Cardiac septum (tissue), 1 donor: ENCODE measurements at regions of chr12 and their contacts with region 1.

Region 1: DNA sequence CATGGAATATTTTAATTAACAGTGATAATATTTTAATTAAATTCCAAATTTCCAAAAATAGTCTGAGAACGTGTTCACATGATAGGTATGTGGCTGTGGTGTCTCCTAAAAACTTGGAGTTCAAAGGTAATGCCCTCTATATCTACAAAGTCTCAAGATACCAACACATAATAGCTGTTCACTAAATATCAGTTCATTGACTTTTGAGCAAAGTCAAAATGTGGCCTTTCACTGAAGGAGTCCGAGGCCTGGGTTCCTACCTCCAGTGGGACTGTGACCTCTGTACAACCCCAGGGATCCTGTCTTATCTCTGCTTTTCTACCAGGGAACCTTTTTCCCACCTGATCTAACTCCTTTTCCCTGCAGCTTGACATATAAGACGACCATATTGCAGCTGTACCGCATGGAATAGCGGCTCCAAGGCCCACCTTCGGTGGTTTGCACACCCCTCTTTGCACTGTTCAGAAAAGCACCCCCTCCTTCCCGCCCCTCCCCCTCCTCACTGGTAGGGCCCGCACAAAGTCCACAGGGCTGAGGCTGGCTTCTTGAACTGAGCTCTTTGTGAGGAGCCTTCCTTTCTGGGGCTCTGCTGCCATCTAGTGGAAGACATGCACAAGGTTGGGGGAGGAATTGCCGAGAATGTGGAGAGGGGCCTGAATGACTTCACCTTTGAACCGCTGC is 3.1 kb downstream of the CCND2 start:
- DNase-seq: peak; percentile 91

Region 2: GRCh38 chr12:3885277-3886094 is 391.2 kb before region 1 on chr12:
- intact Hi-C with region 1: loop called (anchors 2 kb)
- DNase-seq: no peak

Region 3: DNA sequence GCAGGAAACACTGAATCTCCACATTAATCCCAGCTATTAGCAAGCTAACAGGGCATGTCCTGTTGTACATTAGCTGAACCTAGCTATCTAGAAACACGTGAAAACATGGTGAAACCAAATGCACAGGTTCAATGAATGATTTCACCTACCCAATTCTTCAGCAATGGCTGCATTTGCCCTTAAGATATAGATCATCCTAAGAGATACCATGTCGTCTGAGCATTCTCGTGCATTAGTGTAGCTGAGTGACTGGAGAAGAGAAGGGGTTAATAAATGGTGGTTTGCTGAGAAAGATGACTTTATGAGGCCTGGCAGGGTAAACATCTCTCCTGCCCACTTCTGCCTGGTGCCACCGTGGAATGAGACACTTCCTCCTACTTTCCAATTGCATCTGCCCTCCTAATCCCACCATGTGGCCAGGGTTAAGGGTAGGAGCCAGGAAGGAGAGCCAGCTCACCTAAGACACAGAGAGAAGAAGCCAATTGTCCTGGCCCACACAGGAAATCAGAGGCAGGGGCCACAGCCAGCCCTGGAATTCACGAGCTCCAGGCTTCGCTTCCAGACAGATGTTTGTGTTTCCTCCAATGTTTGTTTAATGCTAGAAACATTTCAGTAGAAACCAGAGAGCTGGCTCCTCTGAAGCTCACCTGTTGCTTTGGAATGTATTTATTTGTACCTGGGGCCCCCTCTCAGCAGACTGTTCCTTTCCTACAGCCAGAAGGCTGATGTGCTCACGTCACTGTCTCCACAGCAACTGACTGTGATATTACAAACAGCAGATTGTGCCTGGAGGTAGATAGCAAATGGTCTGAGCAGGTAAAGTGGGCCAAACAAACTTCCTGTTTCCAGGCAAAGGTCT is 277.5 kb before region 1 on chr12:
- intact Hi-C with region 1: loop called (anchors 2 kb)
- DNase-seq: no peak

Region 4: DNA sequence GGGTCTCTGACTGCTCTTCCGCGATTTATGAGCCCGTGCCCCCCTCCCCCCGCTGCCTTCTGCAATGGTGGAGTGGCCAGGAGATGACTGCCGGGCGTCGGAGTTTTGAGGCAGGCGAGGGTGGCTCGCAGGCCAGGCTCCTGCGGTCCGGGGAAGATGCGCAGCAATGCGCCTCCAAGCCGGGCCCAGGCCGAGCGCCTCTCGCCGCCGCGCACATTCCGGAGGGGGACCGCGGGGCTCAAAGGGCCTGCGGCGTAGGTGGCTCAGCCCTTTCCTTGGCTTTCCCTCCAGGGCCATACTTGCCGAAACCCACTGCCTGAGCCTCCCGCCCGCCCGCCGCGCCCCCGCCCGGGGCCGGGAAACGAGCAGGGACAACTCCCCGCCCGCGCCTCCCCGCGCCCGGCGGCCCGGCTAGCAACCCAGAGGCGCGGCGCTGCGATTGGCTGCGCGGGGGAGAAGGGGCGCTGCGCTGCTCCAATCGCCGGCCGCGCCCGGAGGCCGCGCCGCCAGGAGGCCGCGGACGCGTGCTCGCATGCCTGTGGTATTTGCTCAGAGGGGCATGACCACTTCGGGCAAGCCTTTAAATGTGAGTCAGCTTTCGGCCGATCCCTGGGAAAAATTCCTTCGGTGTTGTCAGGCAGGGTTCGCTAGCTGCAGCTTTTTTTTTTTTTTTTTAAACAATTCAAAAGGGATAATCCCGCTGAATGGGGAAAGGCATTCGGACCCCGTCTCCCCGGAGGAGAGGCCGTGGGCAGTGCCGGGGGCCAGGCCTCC is 245.5 kb before region 1 on chr12:
- intact Hi-C with region 1: loop called (anchors 2 kb)
- DNase-seq: peak; percentile 90

Region 5: DNA sequence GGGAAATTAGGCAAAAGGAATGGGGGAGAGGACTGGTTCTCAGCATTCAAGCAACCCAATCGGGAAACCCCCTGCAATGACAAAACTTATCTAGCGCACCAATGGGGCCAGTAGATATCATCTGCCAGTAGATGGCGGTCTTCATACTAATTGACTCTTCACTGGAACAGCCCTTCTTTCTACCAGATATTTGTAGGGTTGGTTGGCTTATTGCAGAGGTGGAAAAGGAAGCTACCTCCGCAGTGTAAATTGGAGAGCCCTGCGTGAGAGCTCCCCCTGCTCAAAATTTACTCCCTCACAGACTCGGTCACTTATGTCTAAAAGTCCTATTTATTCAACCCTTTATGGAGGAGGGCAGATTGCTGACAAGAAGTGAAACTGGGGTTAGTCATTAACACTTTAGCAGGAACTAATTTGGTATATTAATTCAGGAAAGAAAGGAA is 169.2 kb before region 1 on chr12:
- intact Hi-C with region 1: loop called (anchors 2 kb)
- DNase-seq: no peak

Region 6: GRCh38 chr12:4178424-4179170 is 98.1 kb before region 1 on chr12:
- intact Hi-C with region 1: no loop called
- DNase-seq: no peak

Region 7: GRCh38 chr12:4320853-4321701 is 44.4 kb after region 1 on chr12 and contains the start of gene TIGAR:
- intact Hi-C with region 1: loop called (anchors 5 kb)
- DNase-seq: peak; percentile 98
- total RNA-seq, gene TIGAR: 13.0 TPM